ENCODE measurements at regions of chr5 and their contacts with region 1.

Region 1: GRCh38 chr5:7261049-7261448 is 134.9 kb upstream of the ADCY2 start:
- DNase-seq: no peak
- ATAC-seq: peak in 1 of 2 donors; percentile 81
- H3K4me3 ChIP-seq: no peak overlapping the region
- H3K27ac ChIP-seq: no peak overlapping the region
- H3K4me1 ChIP-seq: no peaks in the 10 kb centered on the region
- H3K27me3 ChIP-seq: no peaks in the 10 kb centered on the region
- CTCF ChIP-seq: peak; percentile 43 to 64 (median 52)
- POLR2A ChIP-seq: no peak

Region 2: DNA sequence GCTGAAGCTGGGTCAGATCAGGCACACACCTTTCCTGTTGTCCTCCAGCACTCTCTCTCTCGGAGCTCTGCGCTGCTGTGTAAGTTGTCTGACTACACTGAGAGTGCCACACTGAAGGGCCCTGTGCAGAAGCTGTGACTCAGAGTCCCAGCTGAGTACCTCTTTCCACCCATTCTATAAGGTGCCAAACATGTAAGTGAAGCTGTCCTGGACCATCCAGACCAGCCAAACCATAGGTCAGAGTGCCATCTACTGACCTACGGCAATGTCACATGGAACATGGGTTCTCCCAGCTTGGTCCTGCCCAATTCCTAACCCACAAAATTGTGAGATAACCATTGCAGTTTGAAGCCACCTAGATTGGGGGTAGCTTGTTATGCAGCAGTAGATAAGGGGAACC is 203.1 kb after region 1 on chr5:
- in situ Hi-C with region 1: no loop called
- intact Hi-C with region 1: loop called (anchors 5 kb)
- DNase-seq: peak; percentile 44 to 67
- ATAC-seq: peak; percentile 98 to 99
- H3K4me3 ChIP-seq: no peak overlapping the region
- H3K27ac ChIP-seq: peak overlapping the region; percentile 21 to 53 (median 39)
- H3K4me1 ChIP-seq: peaks cover 25 to 36% of the 10 kb centered on the region in 2 donors
- H3K27me3 ChIP-seq: no peaks in the 10 kb centered on the region
- CTCF ChIP-seq: peak in 4 of 5 experiments; percentile 13 to 38 (median 28)
- POLR2A ChIP-seq: no peak

Region 3: GRCh38 chr5:7518947-7519560 is 258.0 kb after region 1 on chr5:
- in situ Hi-C with region 1: no loop called
- intact Hi-C with region 1: loop called (anchors 5 kb)
- DNase-seq: peak; percentile 56 to 81
- ATAC-seq: peak; percentile 95 to 97
- H3K4me3 ChIP-seq: no peak overlapping the region
- H3K27ac ChIP-seq: peak overlapping the region; percentile 27 to 59 (median 50)
- H3K4me1 ChIP-seq: peaks cover 4 to 39% of the 10 kb centered on the region in 2 donors
- H3K27me3 ChIP-seq: no peaks in the 10 kb centered on the region
- CTCF ChIP-seq: peak; percentile 68 to 90 (median 82)
- POLR2A ChIP-seq: no peak

Region 4: GRCh38 chr5:7815892-7816534 is 555.0 kb after region 1 on chr5:
- in situ Hi-C with region 1: no loop called
- intact Hi-C with region 1: loop called (anchors 2 kb)
- DNase-seq: peak; percentile 68 to 83
- ATAC-seq: peak; percentile 86 to 96
- H3K4me3 ChIP-seq: no peak overlapping the region
- H3K27ac ChIP-seq: peak overlapping the region; percentile 5 to 62 (median 32)
- H3K4me1 ChIP-seq: peaks cover 4 to 10% of the 10 kb centered on the region in 2 donors
- H3K27me3 ChIP-seq: no peaks in the 10 kb centered on the region
- CTCF ChIP-seq: peak; percentile 75 to 90 (median 84)
- POLR2A ChIP-seq: no peak

Measured in gastrocnemius medialis (tissue), 4 donors.